ENCODE measurements at regions of chr12 and their contacts with region 1.

Region 1: DNA sequence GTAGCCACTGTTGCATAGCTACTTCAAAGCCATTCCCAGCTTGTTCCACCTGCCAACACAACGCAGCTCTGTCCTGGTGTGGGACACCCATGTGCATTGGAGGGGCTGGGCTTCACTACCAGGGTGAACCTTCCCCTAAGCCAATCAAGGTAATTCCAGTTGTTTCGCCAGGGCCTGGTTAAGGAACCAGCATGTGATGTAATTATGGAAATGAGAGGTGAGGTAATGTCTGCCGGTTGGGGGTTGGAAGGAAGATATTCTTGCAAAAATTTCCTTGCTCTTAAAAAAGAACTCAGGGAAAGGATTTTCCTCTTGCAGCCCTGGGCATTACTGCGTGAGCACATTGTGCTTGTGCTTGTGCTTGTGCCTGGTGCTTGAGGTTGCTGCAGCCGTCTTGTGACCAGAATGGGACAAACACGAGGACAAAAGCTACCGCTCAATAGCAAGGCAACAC is 14.9 kb downstream of the TUBA1C start:
- DNase-seq: no peak
- ATAC-seq: no peak
- H3K4me3 Mint-ChIP-seq: no peak overlapping the region
- H3K27ac Mint-ChIP-seq: no peak overlapping the region
- H3K4me1 Mint-ChIP-seq: no peaks in the 10 kb centered on the region
- H3K27me3 Mint-ChIP-seq: peaks cover 5% of the 10 kb centered on the region

Region 2: GRCh38 chr12:49503674-49504180 is 224.0 kb after region 1 on chr12:
- CTCF ChIA-PET with region 1: no interaction called
- POLR2A ChIA-PET with region 1: interaction called, 10 read pairs
- intact Hi-C with region 1: no loop called
- DNase-seq: no peak
- ATAC-seq: no peak
- H3K4me3 Mint-ChIP-seq: no peak overlapping the region
- H3K27ac Mint-ChIP-seq: no peak overlapping the region
- H3K4me1 Mint-ChIP-seq: peaks cover 12% of the 10 kb centered on the region
- H3K27me3 Mint-ChIP-seq: no peaks in the 10 kb centered on the region